Sigmoid colon (tissue), 7 donors: ENCODE measurements at regions of chr12 and their contacts with region 1.

Region 1: DNA sequence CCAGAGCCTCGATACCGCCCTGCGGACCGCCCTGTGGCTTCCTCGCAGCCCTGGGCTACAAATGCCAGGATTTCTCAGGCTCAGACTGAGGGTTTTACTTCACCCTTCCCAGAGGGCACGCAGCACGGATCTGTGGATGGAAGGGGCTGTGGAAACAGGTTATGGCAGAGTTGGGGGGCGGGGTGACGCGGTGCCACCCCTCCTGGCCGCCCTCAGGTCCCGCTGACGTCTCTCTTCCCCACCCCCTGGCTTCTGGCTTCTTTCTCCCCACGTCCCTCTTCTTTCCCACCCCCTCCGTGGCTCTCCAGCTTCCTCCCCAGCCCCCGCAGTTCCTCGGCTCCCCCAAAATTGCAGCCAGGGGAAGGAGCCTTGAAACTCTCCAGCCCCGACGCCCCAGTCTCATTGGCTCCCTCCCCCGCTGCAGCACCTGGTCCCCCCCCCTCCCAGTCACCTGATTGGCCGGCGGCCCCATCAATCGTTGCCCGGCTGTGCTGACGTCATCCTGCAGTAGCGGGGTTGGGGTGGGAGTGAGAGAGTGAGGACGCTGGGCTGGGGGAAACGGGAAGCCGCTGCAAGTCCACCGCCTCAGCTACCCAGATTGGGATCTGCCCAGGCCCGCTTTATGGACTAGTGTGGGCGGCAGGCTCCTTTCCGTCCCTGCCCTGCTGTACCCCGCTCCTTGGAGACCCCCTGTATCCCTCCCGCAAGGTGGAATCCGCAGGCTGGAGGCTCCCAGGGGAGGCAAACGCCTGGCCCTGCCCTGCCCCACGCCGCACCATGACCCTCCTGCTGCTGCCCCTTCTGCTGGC is at the start of gene CLSTN3:
- DNase-seq: peak; percentile 91
- H3K4me3 ChIP-seq: peak within 1 kb of the TSS; percentile 39 to 67 (median 58)
- H3K27ac ChIP-seq: peak within 1 kb of the TSS; percentile 59 to 79 (median 72)
- H3K4me1 ChIP-seq: peaks cover 0 to 21% (median 18%) of the 10 kb centered on the region in 4 donors
- H3K27me3 ChIP-seq: no peaks in the 10 kb centered on the region
- CTCF ChIP-seq: no peak
- EP300 ChIP-seq: no peak
- POLR2A ChIP-seq: no peak
- total RNA-seq, gene CLSTN3: 11.5 to 41.5 (median 19.3) TPM

Region 2: DNA sequence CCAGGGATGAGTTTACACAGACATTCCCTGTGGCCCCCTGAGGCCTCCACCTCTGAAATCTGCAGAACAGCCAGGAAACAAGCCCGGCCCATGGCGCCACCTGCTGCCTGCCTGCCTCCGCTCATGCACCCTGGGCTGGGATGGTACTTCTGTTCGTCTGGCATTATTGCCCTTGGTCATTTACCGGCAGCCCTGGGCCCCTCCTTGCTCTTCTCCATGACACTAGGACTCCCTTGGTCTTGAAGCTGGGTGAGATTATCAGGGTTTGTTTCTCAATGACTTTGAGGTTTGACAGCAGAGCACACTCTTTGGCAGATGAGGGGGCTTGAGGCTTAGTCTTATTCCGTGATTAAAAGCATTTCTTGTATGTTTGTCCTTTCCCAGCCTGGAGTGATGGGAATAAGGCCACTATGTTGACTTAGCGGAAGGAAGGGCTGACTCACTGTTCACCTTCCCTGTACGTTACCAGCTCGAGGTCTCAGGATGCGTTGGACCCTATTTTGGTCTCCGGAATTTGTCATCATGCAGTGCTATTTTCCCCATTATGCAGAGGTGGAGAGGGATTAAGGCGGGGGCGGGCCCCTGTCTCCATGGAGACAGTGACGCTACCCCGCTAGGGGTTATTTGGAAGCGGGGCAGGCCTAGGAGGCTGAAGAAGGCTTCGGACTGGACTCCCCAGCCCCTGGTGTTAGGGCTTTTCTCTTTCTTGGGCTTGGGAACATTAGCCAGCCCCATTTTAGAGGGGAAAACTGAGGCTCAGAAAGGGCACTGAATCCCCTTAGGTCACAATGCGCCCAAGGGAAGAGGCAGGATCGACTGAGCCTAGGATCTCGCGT is 58.7 kb after region 1 on chr12:
- intact Hi-C with region 1: loop called (anchors 5 kb)
- DNase-seq: peak; percentile 79
- H3K4me3 ChIP-seq: peak overlapping the region; percentile 72 to 90 (median 75)
- H3K27ac ChIP-seq: peak overlapping the region; percentile 86 to 93 (median 90)
- H3K4me1 ChIP-seq: peaks cover 0 to 32% (median 19%) of the 10 kb centered on the region in 4 donors
- H3K27me3 ChIP-seq: no peaks in the 10 kb centered on the region
- CTCF ChIP-seq: peak in 3 of 4 experiments; percentile 31 to 44 (median 43)
- EP300 ChIP-seq: peak in 1 of 4 donors; percentile 26
- POLR2A ChIP-seq: no peak